Dorsolateral prefrontal cortex (tissue), 120 donors: ENCODE measurements at regions of chr12 and their contacts with region 1.

Region 1: GRCh38 chr12:8081251-8081920 is 688 bp upstream of the NECAP1 start:
- DNase-seq: peak in 1 of 10 donors; percentile 17
- H3K4me3 ChIP-seq: peak overlapping the region; percentile 70 to 100 (median 93)
- H3K27ac ChIP-seq: peak overlapping the region; percentile 76 to 98 (median 94)
- H3K27me3 ChIP-seq: no peaks in the 10 kb centered on the region
- CTCF ChIP-seq: no peak

Region 2: DNA sequence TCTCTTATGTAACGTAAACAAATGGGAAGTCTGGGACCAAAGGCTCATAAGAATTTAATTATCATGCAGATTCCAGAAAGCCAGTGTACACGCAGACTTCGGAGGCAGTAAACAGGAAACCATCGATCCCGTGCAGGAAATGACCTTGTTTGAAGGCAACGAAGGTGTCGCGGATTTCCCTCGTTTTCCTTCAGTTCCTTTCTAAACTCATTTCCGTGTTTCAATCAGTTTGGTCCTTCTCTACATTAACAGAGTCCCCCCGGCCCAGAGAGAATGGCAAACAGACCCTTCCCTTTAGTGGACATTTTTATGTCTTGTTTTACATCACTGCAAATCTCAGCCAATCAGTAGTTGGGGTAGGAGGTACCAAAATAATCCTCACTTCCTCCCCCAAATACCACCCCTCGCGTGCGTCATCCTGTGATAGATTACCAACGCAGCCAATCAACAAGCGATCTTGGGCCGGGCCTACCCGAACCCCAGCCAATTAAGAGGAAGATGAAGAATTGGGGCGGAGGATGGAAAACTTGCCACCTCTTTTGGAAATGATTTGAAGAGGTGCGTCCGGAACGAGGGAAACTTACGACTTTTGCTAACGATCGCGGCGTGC is 55.0 kb before region 1 on chr12:
- intact Hi-C with region 1: loop called (anchors 2 kb)
- DNase-seq: peak; percentile 89 to 99 (median 97)
- H3K4me3 ChIP-seq: peak overlapping the region; percentile 60 to 98 (median 87)
- H3K27ac ChIP-seq: peak overlapping the region; percentile 96 to 100 (median 100)
- H3K27me3 ChIP-seq: no peaks in the 10 kb centered on the region
- CTCF ChIP-seq: peak in 7 of 56 donors; percentile 6 to 25 (median 10)

Region 3: GRCh38 chr12:8032242-8033152 is 48.9 kb before region 1 on chr12 and contains the start of gene FOXJ2:
- intact Hi-C with region 1: loop called (anchors 2 kb)
- DNase-seq: peak; percentile 45 to 86 (median 68)
- H3K4me3 ChIP-seq: peak within 1 kb of the TSS; percentile 69 to 100 (median 96)
- H3K27ac ChIP-seq: peak within 1 kb of the TSS; percentile 58 to 98 (median 93)
- H3K27me3 ChIP-seq: no peaks in the 10 kb centered on the region
- CTCF ChIP-seq: peak in 10 of 56 donors; percentile 2 to 24 (median 13)
- total RNA-seq, gene FOXJ2: 13.4 to 28.9 (median 16.8) TPM

Region 4: DNA sequence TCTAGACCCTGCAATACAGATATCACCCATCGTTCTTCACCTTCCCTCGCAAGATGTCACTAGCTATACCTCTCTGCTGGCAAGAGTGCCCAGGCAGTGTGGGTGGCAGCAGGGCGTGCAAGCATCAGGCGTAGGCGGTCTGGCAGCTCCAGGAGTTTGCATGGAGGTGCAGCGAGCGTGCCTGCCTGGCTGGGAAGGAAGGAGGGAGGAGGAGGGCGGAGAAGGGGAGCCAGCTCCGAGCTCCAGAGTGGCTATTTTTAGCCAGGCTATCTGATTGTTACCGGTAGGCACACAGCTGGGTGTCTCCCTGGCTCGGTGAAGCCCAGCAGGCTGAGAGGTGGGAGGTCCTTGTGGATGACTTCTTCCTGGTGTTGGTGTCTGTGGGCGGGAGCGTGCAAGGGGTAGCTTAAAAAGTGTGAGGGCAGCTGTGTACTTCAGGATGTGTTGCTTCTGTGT is 42.7 kb before region 1 on chr12:
- intact Hi-C with region 1: loop called (anchors 2 to 5 kb)
- DNase-seq: peak in 9 of 10 donors; percentile 29 to 86 (median 75)
- H3K4me3 ChIP-seq: peak overlapping the region in 54 of 59 donors; percentile 7 to 98 (median 37)
- H3K27ac ChIP-seq: peak overlapping the region in 52 of 59 donors; percentile 5 to 98 (median 52)
- H3K27me3 ChIP-seq: no peaks in the 10 kb centered on the region
- CTCF ChIP-seq: no peak